ENCODE measurements at regions of chr1 and their contacts with region 1.

Region 1: DNA sequence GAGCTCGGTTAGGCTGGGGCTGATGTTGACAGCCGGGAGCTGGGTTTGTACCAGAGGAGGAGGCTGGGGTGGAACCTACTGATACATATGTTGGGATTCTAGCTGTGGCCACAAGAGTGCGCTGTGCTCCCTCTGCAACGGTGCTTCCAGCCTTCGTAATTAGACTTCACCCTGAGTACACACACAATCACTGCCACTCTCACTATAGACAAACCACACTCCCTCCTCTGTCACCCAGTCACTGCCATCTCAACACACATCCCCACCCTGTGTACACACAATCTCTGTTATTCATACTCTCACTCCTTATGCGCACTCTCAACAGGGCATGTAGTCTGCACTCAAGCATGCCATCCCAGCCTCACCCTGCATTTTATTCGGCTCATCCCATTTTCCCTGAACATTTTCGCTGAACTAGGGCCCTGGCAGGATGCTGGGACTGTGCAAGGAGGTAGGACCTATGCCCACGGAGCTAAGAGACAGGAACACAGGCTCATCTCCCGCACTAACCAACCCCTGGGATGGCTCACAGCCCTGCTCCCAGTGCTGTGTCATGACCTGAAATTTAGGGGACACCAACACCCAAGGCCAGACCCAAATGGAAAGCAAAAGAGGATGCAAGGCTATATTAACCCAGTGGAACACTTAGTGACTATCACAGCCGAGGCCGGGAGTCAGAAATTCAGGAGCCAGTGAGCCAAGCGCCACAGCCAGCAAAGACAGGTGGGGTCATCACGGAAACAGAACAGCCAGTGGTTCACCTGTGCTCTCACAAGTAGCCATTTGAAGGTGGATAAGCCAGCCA is 5.7 kb downstream of the GJB3 start:
- DNase-seq: peak; percentile 84
- H3K4me3 ChIP-seq: no peak overlapping the region
- H3K27ac ChIP-seq: no peak overlapping the region
- H3K4me1 ChIP-seq: no peaks in the 10 kb centered on the region
- H3K27me3 ChIP-seq: no peaks in the 10 kb centered on the region
- CTCF ChIP-seq: peak; percentile 49 to 85 (median 82)
- POLR2A ChIP-seq: no peak

Region 2: DNA sequence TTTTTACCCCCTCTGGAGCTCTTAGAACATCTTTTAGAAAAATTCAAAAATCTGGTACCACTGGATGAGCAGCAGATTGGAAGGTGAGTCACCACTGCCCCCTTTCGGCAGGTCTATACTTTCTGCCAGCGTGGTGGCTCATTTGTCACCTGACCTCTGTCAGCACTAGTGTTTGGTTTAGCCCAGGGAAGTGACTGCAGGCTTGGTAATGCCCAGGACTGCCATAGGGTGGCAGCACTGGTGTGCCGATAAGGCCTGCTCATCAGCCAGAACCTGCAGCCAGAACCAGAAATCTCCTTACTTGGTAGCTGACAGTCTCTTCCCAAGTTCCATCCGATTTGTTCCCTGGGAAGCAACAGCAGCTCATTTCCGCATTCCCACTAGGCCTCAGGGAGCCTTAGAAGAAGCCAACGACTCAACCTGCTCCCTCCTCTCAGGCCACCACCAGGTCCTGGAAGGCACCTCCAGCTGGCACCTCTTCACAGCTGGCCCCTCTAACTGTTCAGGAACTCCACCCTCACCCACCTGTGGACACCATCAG is 66.0 kb after region 1 on chr1:
- intact Hi-C with region 1: loop called (anchors 5 kb)
- DNase-seq: peak; percentile 84
- H3K4me3 ChIP-seq: no peak overlapping the region
- H3K27ac ChIP-seq: peak overlapping the region in 1 of 2 donors; percentile 6
- H3K4me1 ChIP-seq: peaks cover 7% of the 10 kb centered on the region
- H3K27me3 ChIP-seq: no peaks in the 10 kb centered on the region
- CTCF ChIP-seq: peak; percentile 91 to 98 (median 96)
- POLR2A ChIP-seq: no peak

Measured in prostate gland (tissue), 2 donors.